Activated B cell treated with CpG ODN at 0.5 μM for 24 hours (primary cell): ENCODE measurements at regions of chr11 and their contacts with region 1.

Region 1: DNA sequence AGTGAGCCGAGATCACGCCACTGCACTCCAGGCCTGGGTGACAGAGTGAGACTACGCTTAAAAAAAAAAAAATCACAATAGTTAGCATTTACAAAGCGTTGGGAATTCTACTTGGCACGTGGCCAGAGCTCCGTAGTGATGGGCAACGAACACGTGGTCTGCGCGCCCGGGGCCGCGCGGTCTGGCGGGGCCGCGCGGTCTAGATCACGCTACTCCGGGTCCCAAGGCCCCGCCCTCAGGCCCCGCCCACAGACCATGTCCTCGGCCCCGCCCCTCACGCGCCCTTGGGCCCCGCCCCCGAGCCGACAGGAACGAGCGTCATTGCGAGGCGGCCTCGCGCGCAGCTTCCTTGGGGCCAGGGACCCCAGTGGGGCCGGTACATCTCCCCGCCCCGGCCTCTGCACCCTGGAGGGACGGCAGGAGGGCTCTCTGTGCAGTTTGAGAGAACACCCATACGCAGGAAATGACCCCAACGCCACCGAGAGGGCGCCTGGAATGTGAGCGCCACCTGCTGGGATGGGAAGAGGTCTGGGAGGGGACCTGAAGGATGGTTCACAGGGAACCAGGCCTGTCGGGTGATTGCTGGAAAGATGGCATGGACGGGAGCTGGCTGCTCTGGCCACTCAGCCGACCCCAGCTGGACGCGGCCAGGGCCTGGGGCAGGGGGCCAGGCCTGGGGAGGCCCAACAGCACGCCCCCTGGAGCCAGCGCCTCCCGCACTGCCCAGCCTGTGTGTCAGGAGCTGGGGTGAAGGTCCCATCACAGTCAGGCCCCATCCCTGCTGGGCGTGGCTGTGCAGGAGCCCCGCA is 2.0 kb upstream of the PTDSS2 start:
- DNase-seq: peak; percentile 97
- ATAC-seq: peak; percentile 75
- H3K4me3 Mint-ChIP-seq: peak overlapping the region; percentile 94
- H3K27ac Mint-ChIP-seq: peak overlapping the region; percentile 95
- H3K4me1 Mint-ChIP-seq: peaks cover 34% of the 10 kb centered on the region
- H3K27me3 Mint-ChIP-seq: no peaks in the 10 kb centered on the region
- CTCF ChIP-seq: no peak

Region 2: GRCh38 chr11:236774-237767 is 211.1 kb before region 1 on chr11 and contains the start of gene PSMD13:
- CTCF ChIA-PET with region 1: no interaction called
- POLR2A ChIA-PET with region 1: interaction called, 7 read pairs
- intact Hi-C with region 1: loop called (anchors 1 kb)
- DNase-seq: peak; percentile 85
- ATAC-seq: peak; percentile 78
- H3K4me3 Mint-ChIP-seq: peak within 1 kb of the TSS; percentile 98
- H3K27ac Mint-ChIP-seq: peak within 1 kb of the TSS; percentile 99
- H3K4me1 Mint-ChIP-seq: peaks cover 41% of the 10 kb centered on the region
- H3K27me3 Mint-ChIP-seq: no peaks in the 10 kb centered on the region
- CTCF ChIP-seq: no peak
- total RNA-seq, gene PSMD13: 147 and 149 TPM in 2 replicates

Region 3: DNA sequence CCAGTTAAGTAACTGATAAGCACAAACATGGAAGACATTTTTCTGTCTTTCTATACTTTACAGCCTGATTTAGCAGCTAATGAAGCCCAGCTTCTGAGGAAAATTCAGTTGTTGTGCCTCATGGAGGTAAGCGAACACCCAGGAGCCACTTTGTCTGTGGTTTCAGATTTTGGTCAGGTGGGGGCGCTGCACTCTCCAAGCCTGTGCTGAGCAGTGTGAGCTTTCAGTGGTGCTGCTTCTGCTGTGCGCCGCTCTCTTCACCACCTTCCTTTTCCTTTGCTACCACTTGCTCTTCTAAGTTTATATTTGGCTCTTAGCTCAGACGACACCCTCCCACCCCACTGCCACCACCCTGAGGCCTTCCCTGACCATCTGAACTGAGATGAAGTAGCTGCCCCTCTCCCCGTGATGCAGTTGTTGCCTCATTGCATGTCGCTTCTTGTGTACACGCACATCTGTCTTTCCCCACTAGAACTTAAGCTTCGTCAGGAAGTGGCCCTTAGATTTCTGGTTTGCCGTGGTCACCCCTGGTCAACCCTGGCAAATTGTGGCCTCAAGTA is 197.3 kb before region 1 on chr11:
- CTCF ChIA-PET with region 1: interaction called, 8 read pairs
- POLR2A ChIA-PET with region 1: no interaction called
- intact Hi-C with region 1: loop called (anchors 5 kb)
- DNase-seq: peak; percentile 60
- ATAC-seq: peak; percentile 96
- H3K4me3 Mint-ChIP-seq: no peak overlapping the region
- H3K27ac Mint-ChIP-seq: peak overlapping the region; percentile 36
- H3K4me1 Mint-ChIP-seq: peaks cover 2% of the 10 kb centered on the region
- H3K27me3 Mint-ChIP-seq: no peaks in the 10 kb centered on the region
- CTCF ChIP-seq: peak; percentile 29

Region 4: DNA sequence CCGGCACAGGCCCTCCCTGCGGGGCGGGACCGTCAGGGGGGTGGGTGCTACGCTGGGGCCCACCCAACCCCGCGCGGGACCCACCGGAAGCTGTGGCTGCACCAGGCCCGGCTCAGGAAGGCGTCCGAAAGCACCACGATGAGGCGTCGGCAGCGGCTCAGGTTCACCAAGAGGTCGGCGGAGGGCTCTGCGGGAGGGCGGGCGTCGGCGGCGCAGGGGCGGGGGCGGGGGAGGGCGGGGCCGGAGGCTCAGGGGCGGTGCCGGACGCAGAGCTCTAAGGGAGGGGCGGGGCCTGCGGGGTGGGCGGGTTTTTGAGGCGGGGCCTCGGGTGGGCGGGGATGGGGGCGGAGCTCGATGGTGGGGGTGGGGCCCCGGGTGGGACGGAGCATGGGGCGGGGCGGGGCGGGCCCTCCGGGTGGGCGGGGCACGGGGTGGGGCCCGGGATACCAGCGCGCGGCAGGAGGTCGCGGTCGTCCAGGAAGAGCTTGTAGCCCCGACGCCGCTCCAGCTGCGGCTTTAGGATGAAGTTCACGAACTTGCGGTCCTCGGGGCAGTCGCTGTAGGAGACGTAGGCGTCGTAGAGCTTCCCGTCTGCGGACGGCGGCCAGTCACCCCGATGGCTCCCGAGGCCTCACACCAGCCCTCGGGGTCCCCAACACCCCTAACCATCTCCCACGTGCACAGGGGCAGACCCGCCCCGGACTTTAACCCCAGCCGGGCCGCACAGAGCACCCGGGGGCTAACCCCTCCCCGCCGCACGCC is 41.0 kb before region 1 on chr11:
- CTCF ChIA-PET with region 1: interaction called, 8 read pairs
- POLR2A ChIA-PET with region 1: interaction called, 50 read pairs
- intact Hi-C with region 1: loop called (anchors 1 kb)
- DNase-seq: peak; percentile 76
- ATAC-seq: peak; percentile 85
- H3K4me3 Mint-ChIP-seq: peak overlapping the region; percentile 60
- H3K27ac Mint-ChIP-seq: peak overlapping the region; percentile 35
- H3K4me1 Mint-ChIP-seq: peaks cover 3% of the 10 kb centered on the region
- H3K27me3 Mint-ChIP-seq: no peaks in the 10 kb centered on the region
- CTCF ChIP-seq: no peak

Region 5: DNA sequence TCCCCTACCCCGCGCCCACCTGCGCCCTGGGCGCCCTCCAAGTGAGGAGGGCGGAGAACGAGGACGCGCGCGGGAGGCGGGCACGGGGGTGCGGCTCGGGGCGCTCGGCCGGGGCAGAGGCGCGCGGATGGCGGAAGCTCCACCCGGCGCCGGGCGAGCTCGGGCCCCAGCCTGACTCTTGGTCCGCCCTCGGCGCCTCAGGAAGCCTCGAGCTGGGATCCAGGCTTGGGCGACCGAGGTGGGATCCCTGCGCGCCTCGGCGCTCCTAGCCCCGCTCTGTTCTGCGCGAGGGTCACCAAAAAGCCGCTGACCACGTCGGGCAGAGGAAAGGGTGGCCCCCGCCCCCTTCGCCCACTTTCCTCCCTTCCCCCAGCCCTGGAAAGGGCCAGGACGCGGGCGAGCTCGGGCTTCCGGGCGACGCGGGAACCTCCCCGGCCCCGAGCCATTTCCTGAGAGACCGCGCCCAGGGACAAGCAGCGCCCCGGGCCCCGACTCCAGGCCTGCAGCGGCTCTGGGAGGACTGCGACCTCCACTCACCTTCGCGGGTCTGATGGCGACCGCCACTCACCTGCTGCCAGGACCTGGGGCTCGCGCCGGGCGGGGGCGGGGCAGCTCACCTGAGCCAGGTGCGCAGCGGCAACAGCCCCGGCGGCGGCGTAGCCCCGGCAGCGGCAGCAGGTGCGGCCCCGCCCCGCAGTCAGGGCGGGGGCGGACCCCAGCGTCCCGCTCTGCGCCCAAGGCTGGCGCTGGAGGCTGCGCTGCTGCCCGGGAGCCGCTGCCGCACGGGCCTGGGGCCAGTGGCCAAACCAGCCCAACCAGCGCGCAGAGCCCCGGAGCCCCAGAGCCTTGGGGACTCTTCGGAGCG is 31.1 kb before region 1 on chr11:
- CTCF ChIA-PET with region 1: interaction called, 3 read pairs
- POLR2A ChIA-PET with region 1: interaction called, 41 read pairs
- intact Hi-C with region 1: loop called (anchors 1 kb)
- DNase-seq: peak; percentile 55
- ATAC-seq: peak; percentile 60
- H3K4me3 Mint-ChIP-seq: peak overlapping the region; percentile 79
- H3K27ac Mint-ChIP-seq: no peak overlapping the region
- H3K4me1 Mint-ChIP-seq: peaks cover 32% of the 10 kb centered on the region
- H3K27me3 Mint-ChIP-seq: no peaks in the 10 kb centered on the region
- CTCF ChIP-seq: no peak

Region 6: GRCh38 chr11:472272-472671 is 24.1 kb after region 1 on chr11:
- CTCF ChIA-PET with region 1: no interaction called
- POLR2A ChIA-PET with region 1: no interaction called
- intact Hi-C with region 1: no loop called
- DNase-seq: no peak
- ATAC-seq: no peak
- H3K4me3 Mint-ChIP-seq: no peak overlapping the region
- H3K27ac Mint-ChIP-seq: no peak overlapping the region
- H3K4me1 Mint-ChIP-seq: no peaks in the 10 kb centered on the region
- H3K27me3 Mint-ChIP-seq: no peaks in the 10 kb centered on the region
- CTCF ChIP-seq: no peak

Region 7: DNA sequence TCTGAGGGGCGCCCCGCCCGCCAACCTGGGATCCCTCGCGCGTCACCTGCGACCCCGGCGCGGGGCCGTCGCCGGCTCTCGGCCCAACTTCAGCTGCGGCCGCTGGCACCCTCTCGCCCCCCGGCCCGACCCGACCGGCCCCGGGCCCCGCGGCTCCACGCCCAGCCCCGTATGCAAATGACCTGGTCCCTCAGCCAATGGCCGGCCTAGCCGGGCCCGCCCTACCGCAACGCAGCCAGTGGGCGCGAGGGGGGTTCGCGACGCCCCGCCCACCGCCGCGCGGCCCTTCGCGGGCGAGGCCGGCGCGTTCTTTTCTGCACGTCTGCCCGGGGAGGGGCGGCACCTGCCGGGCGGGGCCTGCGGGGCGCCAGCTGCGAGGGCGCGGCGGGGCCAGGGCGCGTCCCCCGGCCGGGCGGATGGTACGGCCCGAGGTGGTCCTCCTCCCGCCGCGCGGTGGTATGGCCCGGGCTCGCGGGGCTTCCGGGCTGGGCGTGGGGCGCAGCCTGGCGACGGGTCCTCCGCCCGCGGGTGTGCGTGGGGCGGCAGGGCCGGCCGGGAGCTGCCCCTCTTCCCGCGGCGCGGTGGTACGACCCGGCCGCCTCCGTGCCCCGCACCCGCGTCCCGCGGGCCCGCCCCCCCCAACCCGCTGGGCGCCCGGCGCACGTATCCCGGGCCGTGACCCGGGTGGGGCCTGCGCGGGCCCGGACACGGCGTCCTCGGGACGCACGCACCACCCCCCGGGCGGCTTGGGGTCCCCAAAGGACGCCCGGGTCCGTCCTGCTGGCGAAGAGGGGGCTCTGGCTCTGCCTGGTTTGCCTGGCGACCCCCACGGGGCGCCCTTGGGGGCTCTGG is 120.4 kb after region 1 on chr11:
- CTCF ChIA-PET with region 1: no interaction called
- POLR2A ChIA-PET with region 1: no interaction called
- intact Hi-C with region 1: loop called (anchors 2 kb)
- DNase-seq: peak; percentile 96
- ATAC-seq: peak; percentile 93
- H3K4me3 Mint-ChIP-seq: peak overlapping the region; percentile 79
- H3K27ac Mint-ChIP-seq: peak overlapping the region; percentile 41
- H3K4me1 Mint-ChIP-seq: peaks cover 7% of the 10 kb centered on the region
- H3K27me3 Mint-ChIP-seq: no peaks in the 10 kb centered on the region
- CTCF ChIP-seq: no peak